Posterior vena cava (tissue), 2 donors: ENCODE measurements at regions of chr4 and their contacts with region 1.

Region 1: GRCh38 chr4:173218411-173219125 is 50.0 kb downstream of the GALNT7 start:
- DNase-seq: no peak

Region 2: DNA sequence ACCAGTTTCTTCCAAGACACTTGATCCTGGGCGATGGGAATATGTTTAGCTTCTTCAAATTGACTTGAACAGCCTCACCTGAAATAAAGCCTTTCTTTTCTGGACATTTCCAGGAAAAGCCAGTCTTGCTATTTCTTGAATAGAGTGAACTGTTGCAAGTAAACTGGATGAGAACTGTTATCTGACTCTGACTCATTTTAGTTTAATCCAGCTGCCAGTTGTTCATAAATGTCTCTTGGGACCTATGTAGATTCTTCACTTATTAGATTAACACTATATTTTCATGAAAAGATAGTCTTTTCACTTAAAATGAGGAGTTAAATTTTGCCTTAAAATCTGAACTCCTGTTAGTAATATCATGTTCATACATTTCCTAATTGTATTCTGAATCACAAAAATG is 665.4 kb before region 1 on chr4:
- intact Hi-C with region 1: loop called in 1 of 2 experiments (anchors 5 kb)
- DNase-seq: no peak